BJ (cell line): ENCODE measurements at regions of chr2 and their contacts with region 1.

Region 1: GRCh38 chr2:174697255-174697654 is 67.0 kb downstream of the CHRNA1 start:
- DNase-seq: no peak
- H3K4me3 ChIP-seq: no peak overlapping the region
- H3K27me3 ChIP-seq: peaks cover 22% of the 10 kb centered on the region
- CTCF ChIP-seq: peak; percentile 95

Region 2: GRCh38 chr2:174577967-174578589 is 119.2 kb before region 1 on chr2:
- CTCF ChIA-PET with region 1: interaction called, 10 read pairs
- POLR2A ChIA-PET with region 1: no interaction called
- DNase-seq: no peak
- H3K4me3 ChIP-seq: no peak overlapping the region
- H3K27me3 ChIP-seq: no peaks in the 10 kb centered on the region
- CTCF ChIP-seq: peak; percentile 82

Region 3: DNA sequence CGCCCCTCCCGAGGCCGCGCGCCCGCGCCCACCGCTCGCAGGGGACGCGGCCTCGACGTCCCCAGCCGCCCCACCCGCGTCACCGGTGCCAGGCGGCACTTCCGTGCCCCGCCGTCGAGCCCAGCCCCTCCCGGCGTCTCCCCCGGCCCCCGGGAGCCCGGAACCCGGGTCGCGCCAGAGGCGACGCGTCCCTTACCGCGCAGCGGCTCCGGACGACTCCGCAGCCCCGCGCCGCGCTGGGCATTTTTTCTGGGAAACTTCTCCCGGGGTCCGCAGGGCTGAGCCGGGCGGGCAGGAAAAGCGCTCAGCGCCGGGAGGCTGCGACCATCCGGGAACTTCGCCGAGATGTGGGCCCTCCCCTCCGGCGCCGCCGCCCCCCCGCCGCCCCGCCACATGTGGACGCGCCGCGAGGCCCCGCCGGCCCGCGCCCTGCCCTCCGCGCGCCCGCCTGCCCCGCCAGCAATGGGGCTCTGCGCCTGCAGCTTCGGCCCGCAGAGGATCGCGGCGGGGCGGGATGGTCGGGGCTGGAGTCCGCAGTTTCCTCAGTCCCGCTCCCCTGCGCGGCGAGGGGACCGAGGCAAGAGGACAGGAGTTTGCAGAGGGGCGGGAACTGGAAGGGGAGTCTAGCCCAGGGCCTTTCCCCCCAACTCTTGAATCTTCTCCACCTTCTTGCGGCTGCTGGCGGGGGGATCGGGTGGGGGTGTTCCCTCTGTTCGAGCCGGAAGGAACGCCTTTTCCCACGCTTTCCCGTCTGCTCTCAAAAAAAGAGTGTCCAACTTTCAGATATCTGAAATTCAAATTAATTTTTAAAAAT is 14.5 kb before region 1 on chr2:
- CTCF ChIA-PET with region 1: interaction called, 94 read pairs
- POLR2A ChIA-PET with region 1: no interaction called
- DNase-seq: no peak
- H3K4me3 ChIP-seq: peak overlapping the region; percentile 92
- H3K27me3 ChIP-seq: no peaks in the 10 kb centered on the region
- CTCF ChIP-seq: no peak

Region 4: GRCh38 chr2:174748948-174749347 is 51.7 kb after region 1 on chr2:
- CTCF ChIA-PET with region 1: interaction called, 17 read pairs
- POLR2A ChIA-PET with region 1: no interaction called
- DNase-seq: no peak
- H3K4me3 ChIP-seq: no peak overlapping the region
- H3K27me3 ChIP-seq: peaks cover 3% of the 10 kb centered on the region; the same call in 1 of the 2 replicates
- CTCF ChIP-seq: peak; percentile 81

Region 5: GRCh38 chr2:174786066-174786725 is 88.9 kb after region 1 on chr2:
- CTCF ChIA-PET with region 1: no interaction called
- POLR2A ChIA-PET with region 1: no interaction called
- DNase-seq: no peak
- H3K4me3 ChIP-seq: no peak overlapping the region
- H3K27me3 ChIP-seq: no peaks in the 10 kb centered on the region
- CTCF ChIP-seq: no peak

Region 6: GRCh38 chr2:174985630-174986029 is 288.4 kb after region 1 on chr2:
- CTCF ChIA-PET with region 1: interaction called, 34 read pairs
- POLR2A ChIA-PET with region 1: no interaction called
- DNase-seq: no peak
- H3K4me3 ChIP-seq: no peak overlapping the region
- H3K27me3 ChIP-seq: no peaks in the 10 kb centered on the region
- CTCF ChIP-seq: peak; percentile 57

Region 7: GRCh38 chr2:174992886-174993285 is 295.6 kb after region 1 on chr2:
- CTCF ChIA-PET with region 1: interaction called, 34 read pairs
- POLR2A ChIA-PET with region 1: no interaction called
- DNase-seq: no peak
- H3K4me3 ChIP-seq: no peak overlapping the region
- H3K27me3 ChIP-seq: no peaks in the 10 kb centered on the region
- CTCF ChIP-seq: no peak

Region 8: GRCh38 chr2:175126661-175127060 is 429.4 kb after region 1 on chr2:
- CTCF ChIA-PET with region 1: no interaction called
- POLR2A ChIA-PET with region 1: no interaction called
- DNase-seq: no peak
- H3K4me3 ChIP-seq: no peak overlapping the region
- H3K27me3 ChIP-seq: no peaks in the 10 kb centered on the region
- CTCF ChIP-seq: no peak

Region 9: GRCh38 chr2:175282290-175282689 is 585.0 kb after region 1 on chr2:
- CTCF ChIA-PET with region 1: interaction called, 14 read pairs
- POLR2A ChIA-PET with region 1: no interaction called
- DNase-seq: peak; percentile 4
- H3K4me3 ChIP-seq: no peak overlapping the region
- H3K27me3 ChIP-seq: peaks cover 1% of the 10 kb centered on the region; the same call in 1 of the 2 replicates
- CTCF ChIP-seq: peak; percentile 48